Thyroid gland (tissue), 4 donors: ENCODE measurements at regions of chr4 and their contacts with region 1.

Region 1: DNA sequence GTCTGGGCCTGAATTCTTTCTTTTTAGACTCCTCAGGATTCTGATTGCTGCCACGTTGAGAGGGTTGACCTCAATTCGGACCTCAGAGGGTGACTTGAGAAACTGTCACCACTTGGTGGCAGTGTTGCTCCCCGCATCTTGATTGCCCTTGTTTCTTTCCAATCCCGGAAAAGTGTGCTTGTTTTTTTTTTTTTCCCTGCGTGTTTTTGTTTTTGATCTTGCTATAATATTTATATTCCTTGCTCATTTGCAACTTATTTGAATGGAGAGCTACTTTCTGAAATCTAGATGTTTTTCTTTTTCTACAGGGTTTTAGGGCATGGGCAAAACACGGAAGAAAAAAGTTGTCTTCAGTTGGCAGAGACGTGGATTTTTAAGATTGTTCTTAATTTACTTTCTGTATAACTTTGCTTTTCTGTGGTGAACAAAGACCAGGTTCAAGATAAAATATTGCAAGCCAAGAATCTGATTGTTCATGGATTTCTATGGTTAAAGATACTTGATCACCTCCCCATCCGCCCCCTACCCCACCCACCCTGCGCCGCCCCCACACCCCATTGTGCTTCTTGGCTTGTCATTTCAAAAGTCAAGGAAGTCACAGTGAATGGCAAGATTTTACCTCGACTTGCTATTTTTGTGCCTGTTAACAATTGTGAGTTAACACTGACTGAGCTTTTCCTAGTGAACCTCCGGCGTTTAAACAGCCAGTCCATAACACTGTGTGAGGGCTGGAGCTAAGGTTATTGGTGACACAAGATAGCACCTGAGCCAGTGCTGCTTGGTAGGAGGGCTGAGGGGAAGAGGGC is 102.1 kb downstream of the PTTG2 start:
- DNase-seq: peak; percentile 77 to 83
- H3K4me3 ChIP-seq: no peak overlapping the region
- H3K27ac ChIP-seq: peak overlapping the region in 2 of 3 donors; percentile 39 to 40
- H3K4me1 ChIP-seq: peaks cover 22 to 30% of the 10 kb centered on the region in 2 donors
- H3K27me3 ChIP-seq: no peaks in the 10 kb centered on the region
- CTCF ChIP-seq: peak; percentile 62 to 91 (median 80)
- POLR2A ChIP-seq: no peak

Region 2: DNA sequence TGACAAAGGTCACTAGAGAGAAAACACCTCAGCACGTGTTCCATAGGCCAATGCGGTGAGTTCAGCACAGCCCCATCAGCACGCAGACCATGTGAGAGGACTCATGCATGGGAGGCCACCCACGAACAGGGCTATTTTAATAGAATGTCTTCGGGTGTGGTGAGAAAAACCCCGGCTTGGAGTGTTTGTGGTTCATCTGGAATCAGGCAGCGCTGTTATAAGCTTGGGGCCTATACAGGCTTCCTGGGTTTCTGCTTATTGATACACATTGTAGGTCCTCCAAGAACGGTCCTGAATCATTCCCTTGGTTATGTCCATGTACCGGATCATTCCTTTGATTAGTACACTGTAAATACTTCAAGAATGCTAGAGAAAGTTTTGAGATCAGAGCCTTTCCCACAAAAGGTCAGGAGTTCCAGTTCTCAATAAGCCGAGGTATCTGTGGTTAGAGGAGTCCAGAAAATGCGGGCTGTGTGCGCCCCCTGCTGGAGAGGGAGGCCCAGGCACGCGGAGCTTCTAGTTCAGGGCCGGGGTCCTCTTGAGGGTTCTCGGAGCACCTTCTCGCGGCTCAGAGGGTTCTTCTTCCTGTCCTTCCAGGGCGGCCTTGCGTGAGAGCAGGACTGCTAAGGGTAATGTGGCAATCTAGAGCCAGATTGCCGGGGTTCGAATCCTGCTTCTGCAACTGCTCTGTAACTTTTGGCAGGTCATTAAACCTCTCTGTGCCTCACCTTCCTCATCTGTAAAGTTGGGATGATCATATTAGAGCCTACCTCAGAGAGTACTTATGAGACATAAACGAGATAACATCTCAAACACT is 668.7 kb after region 1 on chr4:
- intact Hi-C with region 1: loop called (anchors 10 kb)
- DNase-seq: peak; percentile 73 to 82
- H3K4me3 ChIP-seq: no peak overlapping the region
- H3K27ac ChIP-seq: no peak overlapping the region
- H3K4me1 ChIP-seq: peaks cover 9 to 27% of the 10 kb centered on the region in 2 donors
- H3K27me3 ChIP-seq: no peaks in the 10 kb centered on the region
- CTCF ChIP-seq: peak; percentile 72 to 90 (median 82)
- POLR2A ChIP-seq: no peak